ENCODE measurements at regions of chr18 and their contacts with region 1.

Region 1: DNA sequence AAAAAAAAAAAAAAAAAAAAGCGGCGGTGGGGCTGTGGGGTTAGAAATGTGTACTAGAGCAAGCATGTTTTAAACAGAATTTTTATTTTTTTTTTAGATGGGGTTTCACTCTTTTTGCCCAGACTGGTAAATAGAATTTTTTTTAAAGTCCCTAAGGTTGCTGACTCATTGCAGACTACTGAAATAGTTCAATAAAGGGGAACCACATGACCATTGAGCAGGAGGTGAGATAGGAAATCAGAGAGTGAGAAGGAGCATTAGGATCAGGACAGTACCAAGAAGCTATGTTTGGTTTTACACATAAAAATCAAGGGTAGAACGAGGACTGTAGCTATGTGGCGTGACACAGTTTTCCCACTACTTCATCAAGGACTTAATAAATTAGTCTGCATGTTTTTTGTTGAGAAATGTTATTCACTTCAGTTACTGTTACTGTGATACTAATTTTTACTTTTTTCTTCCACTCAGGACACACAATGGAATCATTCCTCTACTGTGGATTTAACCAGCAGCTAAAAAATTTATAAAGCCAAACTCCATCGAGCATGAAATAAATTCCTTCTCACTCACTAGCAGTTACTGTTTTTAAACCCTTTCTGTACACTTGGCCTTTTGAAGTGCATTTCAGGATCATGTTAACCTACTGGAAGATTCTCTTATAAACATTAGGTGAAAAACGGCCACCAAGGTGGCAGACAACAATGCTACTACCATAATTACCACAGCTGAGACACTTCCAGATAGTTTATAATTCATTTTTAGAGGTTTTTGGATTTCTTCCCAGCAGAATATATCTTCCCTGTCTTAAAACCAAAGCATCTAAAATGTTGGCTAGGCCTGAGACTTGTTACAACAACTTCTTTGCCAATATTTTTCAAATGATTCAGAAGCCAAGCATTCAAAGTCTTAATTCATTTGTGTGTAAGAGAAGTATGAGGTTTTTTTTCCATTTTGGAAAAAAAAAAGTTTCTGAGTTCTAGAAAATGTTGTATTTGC is 33.2 kb downstream of the LAMA1 start:
- DNase-seq: no peak
- ATAC-seq: no peak

Region 2: GRCh38 chr18:7017013-7017412 is 67.4 kb before region 1 on chr18:
- intact Hi-C with region 1: no loop called
- DNase-seq: no peak
- ATAC-seq: no peak

Region 3: DNA sequence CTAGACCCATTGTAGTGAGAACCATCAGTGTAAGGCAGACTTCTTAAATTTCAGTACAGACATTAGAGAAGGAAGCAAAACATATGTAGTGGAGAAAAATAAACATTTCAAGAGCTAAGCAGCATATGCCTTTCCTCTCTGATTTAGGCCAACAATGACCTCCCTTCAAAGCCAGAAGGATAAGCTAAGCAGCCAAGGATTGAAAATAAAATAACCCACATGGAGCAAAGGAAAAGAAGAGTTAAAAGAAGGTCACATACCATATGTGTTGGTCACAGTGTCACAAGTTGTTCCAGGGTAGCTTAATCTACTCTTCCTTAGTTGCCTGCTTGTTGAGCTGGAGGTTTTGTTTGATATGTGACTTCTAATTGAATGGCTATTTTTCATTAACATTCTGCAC is 48.8 kb after region 1 on chr18:
- intact Hi-C with region 1: loop called (anchors 10 kb)
- DNase-seq: no peak
- ATAC-seq: no peak

Region 4: GRCh38 chr18:7196421-7196820 is 112.0 kb after region 1 on chr18:
- intact Hi-C with region 1: no loop called
- DNase-seq: no peak
- ATAC-seq: no peak